ENCODE measurements at regions of chr6 and their contacts with region 1.

Region 1: DNA sequence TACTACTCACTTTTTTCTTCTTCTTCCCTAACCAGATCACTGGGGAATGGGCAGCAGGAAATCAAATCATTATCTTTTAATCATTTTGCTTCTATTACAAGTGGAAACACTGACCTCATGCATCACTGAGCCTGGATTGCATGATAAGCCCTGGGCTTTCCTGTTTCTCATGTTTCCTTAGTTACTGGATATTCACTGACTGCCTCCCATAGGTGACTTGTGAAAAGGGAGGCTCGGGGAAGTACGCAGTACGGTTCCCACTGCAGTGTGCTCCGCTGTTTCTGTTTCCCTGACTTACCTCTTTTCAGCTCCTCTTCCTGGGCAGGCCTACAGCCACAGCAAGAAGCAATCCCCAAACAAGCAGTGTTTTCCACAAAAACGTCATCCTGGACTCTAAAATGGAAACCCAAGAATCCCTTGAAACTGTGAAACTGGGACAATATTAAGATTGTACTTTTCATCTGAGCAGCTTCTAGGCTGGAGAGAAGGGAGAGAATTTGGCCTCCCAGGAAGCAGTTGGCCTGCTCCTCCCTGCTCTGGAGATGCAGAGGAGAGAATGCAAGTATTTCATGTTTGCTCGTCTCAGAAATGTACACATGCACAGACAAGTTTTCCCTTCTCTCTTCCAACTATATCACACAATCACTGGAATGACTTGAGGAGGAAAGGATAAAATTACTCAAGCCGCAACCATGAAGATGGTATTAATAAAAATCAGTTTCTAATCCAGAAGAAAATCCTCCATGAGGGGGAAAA is 13.1 kb downstream of the BTNL2 start:
- DNase-seq: no peak
- CTCF ChIP-seq: no peak

Region 2: GRCh38 chr6:32190054-32190851 is 203.6 kb before region 1 on chr6 and contains the start of gene PBX2:
- in situ Hi-C with region 1: no loop called
- DNase-seq: peak; percentile 90
- CTCF ChIP-seq: no peak

Region 3: DNA sequence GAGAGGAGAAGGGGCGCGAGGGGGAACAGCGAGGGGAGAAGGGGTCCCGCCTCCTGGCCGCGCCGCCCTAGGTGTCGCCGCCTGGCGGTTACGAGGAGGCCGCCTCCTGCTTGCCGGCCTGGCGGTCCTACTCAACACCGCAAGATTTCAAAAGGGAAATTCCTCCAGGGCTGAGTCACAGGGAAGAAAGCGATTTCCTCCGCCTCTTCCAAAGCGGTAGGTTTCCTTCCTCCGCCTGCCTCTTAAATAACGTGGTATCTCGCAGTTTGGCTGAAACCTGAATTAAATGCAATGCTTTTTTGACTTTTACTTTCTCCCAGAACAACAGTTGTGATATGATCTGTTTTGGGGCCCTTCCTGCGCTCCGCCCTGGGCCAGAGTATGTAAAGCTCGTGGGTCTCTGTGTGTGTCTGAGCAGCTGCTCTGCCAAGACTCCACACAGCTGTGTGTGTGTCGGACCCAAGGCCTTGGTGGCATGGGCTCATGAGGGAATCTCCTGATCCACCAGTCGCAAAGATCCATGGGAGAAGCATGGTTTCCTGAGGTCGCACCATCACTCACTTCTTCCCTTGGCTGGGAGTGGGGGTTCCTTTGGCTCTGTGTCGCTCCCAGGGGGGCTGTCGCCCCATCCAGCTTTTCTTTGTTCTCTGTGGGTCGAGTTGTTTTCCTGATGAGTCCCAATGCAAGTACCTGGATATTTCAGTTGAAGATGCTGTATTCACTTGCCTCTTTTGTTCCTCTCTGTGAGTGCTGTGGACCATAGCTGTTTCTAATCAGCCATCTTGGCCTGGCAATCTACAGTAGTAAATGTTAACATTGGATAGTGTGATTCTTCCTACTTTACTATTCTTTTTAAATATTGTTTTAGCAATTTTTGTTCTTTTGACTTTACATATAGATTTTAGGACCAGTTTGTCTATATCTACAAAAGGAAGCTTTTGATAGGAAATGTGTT is 138.4 kb before region 1 on chr6:
- in situ Hi-C with region 1: loop called (anchors 10 kb)
- DNase-seq: peak; percentile 62
- CTCF ChIP-seq: peak; percentile 73